RWPE1 (cell line): ENCODE measurements at regions of chr21 and their contacts with region 1.

Region 1: GRCh38 chr21:37085726-37086125 is 12.7 kb downstream of the TTC3 start:
- DNase-seq: no peak
- H3K27ac ChIP-seq: no peak overlapping the region
- CTCF ChIP-seq: no peak

Region 2: GRCh38 chr21:37119421-37120218 is 33.9 kb after region 1 on chr21:
- CTCF ChIA-PET with region 1: interaction called, 10 read pairs
- POLR2A ChIA-PET with region 1: no interaction called
- DNase-seq: no peak
- H3K27ac ChIP-seq: no peak overlapping the region
- CTCF ChIP-seq: no peak